ENCODE measurements at regions of chr6 and their contacts with region 1.

Region 1: DNA sequence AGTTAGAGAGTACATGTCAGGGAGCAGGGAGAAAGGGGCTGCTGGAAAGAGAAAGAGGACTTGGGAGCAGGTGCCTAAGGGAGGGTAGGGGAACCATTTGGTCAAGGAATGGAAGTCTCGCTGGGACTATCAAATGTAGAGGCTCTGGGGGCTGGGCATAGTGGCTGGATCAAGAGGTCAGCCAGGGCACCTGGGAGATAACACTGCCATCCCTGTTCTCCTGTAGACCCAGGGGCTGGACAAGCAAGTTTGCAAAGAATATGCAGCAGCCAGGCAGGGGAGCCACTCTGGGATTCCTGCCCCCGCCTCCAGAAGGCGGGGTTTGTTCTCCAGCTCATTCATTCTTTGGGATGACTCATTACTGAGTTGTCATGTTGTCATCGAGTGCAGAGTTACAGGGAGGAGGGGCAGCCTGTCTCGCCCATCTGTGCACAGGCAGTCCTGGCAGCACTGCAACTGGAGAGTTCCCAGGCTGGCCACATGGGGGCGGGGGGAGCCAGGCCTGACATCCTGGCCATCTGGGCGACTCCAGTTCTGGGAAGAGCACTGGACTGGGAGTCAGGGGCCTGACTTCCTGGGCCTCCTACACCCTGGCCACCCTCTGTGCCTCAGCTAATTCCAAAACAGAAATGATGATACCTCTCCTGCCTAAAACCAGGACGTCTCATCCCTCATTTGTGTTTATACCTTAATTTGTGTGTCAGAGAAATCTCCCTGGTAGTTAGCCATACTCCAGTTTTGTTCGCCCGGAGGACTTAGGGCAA is 28.2 kb upstream of the ZFAND3 start:
- DNase-seq: peak; percentile 94
- ATAC-seq: peak; percentile 100
- H3K4me3 Mint-ChIP-seq: no peak overlapping the region
- H3K27ac Mint-ChIP-seq: no peak overlapping the region
- H3K4me1 Mint-ChIP-seq: peaks cover 11% of the 10 kb centered on the region
- H3K27me3 Mint-ChIP-seq: peaks cover 1% of the 10 kb centered on the region
- CTCF ChIP-seq: peak; percentile 92

Region 2: GRCh38 chr6:37713529-37714119 is 77.7 kb before region 1 on chr6:
- CTCF ChIA-PET with region 1: no interaction called
- POLR2A ChIA-PET with region 1: no interaction called
- intact Hi-C with region 1: no loop called
- DNase-seq: no peak
- ATAC-seq: no peak
- H3K4me3 Mint-ChIP-seq: no peak overlapping the region
- H3K27ac Mint-ChIP-seq: no peak overlapping the region
- H3K4me1 Mint-ChIP-seq: peaks cover 4% of the 10 kb centered on the region
- H3K27me3 Mint-ChIP-seq: peaks cover 5% of the 10 kb centered on the region
- CTCF ChIP-seq: no peak

Region 3: DNA sequence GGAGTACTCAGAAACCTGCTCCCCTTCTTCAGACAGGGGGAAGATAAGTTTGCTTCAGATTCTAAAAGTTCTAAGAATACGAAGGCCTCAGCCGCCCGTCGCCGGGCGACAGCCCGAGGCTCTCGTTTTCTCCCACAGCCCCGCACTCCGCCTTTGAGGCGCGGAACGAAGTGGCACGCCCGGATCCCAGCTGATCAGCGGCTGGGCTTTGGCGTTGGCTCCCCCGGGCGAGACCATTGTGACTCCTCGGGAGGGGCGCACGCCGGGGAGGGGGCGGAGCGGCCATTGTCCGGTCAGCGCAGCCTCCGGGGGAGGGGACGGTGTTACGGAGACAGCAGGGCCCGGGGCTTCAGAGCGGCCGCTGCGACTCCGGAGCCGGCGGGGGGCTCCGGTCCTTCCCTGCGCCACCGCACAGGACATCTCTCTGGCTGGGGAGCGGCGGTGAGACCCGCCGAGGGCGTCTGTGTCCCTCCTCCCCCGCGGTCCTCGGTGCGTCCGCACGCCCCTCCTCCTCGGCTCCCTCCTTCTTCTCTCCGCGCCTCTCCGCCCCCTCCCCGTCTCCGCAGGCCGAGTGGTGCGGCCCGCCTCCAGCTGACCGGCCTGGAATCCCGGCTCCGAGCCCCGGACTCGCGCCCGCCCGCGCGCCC is 28.0 kb after region 1 on chr6 and contains the start of gene ZFAND3:
- CTCF ChIA-PET with region 1: interaction called, 10 read pairs
- POLR2A ChIA-PET with region 1: no interaction called
- intact Hi-C with region 1: no loop called
- DNase-seq: peak; percentile 95
- ATAC-seq: peak; percentile 83
- H3K4me3 Mint-ChIP-seq: peak within 1 kb of the TSS; percentile 97
- H3K27ac Mint-ChIP-seq: peak within 1 kb of the TSS; percentile 98
- H3K4me1 Mint-ChIP-seq: peaks cover 51% of the 10 kb centered on the region
- H3K27me3 Mint-ChIP-seq: no peaks in the 10 kb centered on the region
- CTCF ChIP-seq: no peak
- total RNA-seq, gene ZFAND3: 32.3 to 37.9 TPM

Region 4: GRCh38 chr6:37987018-37987417 is 195.7 kb after region 1 on chr6:
- CTCF ChIA-PET with region 1: interaction called, 3 read pairs
- POLR2A ChIA-PET with region 1: no interaction called
- intact Hi-C with region 1: loop called (anchors 10 kb)
- DNase-seq: peak; percentile 63
- ATAC-seq: peak; percentile 54
- H3K4me3 Mint-ChIP-seq: no peak overlapping the region
- H3K27ac Mint-ChIP-seq: peak overlapping the region; percentile 17
- H3K4me1 Mint-ChIP-seq: peaks cover 76% of the 10 kb centered on the region
- H3K27me3 Mint-ChIP-seq: no peaks in the 10 kb centered on the region
- CTCF ChIP-seq: no peak